ENCODE measurements at regions of chr16 and their contacts with region 1.

Region 1: DNA sequence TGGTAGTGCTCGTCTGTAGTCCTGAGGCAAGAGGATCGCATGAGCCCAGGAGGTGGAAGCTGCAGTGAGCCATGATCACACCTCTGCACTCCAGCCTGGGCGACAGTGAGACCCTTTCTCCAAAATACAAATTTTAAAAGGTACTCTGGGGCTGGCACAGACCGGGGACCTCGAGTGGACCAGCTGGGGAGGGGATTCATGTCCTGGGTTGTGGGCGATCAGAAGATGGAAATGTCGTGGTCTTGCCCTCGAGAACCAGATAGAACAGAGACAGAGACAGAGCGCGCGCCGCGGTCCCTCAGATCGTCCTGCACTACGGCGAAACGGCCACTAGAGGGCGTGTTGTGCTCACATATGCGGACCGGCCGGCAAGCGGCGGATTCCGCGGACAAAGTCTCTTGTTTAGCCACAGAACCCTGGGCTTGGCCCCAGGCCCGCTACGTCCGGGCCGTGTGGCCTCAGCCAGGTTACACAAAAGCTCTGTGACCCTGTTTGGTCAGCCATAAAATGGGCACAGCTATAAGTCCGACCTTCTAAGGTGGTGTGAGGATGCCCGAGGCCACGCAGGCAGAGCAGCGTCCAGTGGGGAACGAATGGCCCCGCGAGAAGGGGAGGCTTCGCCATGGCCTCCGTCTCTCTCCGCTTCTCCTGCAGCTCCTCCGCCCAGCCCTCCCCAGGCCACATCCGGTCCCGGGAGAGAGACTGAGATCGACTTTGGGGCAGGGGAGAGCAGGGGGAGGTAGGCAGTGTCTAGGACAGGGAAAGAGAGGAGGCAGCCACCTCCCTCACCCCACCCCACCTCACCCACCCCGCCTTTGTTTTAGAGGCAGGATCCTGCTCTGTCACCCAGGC is 14.6 kb upstream of the SBK1 start:
- DNase-seq: peak; percentile 69 to 95 (median 84)
- ATAC-seq: peak; percentile 73 to 76
- H3K4me3 Mint-ChIP-seq: peak overlapping the region; percentile 70 to 88 (median 82)
- H3K27ac Mint-ChIP-seq: peak overlapping the region; percentile 90 to 99 (median 97)
- H3K4me1 Mint-ChIP-seq: peaks cover 32 to 62% (median 47%) of the 10 kb centered on the region in 4 donors
- H3K27me3 Mint-ChIP-seq: peaks cover 0 to 10% (median 0%) of the 10 kb centered on the region in 5 donors

Region 2: DNA sequence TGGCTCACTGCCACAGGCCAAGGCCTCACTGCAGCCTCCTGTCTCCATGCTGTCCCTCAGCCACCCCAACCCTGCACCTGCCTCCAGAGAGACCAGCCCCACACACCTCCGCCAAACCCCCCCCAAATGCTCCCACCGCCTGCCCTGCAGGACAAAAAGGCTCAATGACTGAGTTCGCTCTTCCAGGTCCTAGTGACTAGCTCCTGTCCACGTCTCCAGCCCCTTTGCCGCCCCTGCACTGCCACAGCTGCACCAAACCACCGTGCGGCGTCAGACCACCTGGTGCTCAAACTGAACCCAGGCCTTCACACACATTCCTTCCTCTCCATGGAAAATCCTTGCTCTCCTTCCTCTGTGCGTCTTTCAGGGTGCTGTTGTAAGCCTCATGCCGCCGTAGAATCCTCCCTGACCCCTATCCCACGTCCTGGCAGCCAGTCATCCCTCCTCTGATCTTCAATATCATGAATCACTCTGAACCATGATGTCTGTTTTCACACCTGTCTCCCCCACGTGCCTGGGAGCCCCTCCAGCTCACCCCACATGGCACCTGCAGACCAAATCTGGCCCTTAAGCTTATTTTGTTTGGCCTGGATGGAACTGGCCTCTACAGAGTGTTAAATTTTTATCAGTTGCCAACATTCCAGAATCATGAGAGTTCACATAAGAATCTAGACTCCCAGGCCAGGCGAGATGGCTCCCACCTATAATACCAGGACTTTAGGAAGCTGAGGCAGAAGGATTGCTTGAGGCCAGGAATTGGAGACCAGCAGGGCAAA is 210.0 kb before region 1 on chr16:
- POLR2A ChIA-PET with region 1: no interaction called
- DNase-seq: no peak
- ATAC-seq: no peak
- H3K4me3 Mint-ChIP-seq: no peak overlapping the region
- H3K27ac Mint-ChIP-seq: peak overlapping the region in 1 of 10 donors; percentile 57
- H3K4me1 Mint-ChIP-seq: peaks cover 0 to 6% (median 0%) of the 10 kb centered on the region in 4 donors
- H3K27me3 Mint-ChIP-seq: peaks cover 9 to 33% (median 21%) of the 10 kb centered on the region in 5 donors

Region 3: GRCh38 chr16:28090646-28091377 is 187.0 kb before region 1 on chr16:
- POLR2A ChIA-PET with region 1: no interaction called
- DNase-seq: no peak
- ATAC-seq: no peak
- H3K4me3 Mint-ChIP-seq: no peak overlapping the region
- H3K27ac Mint-ChIP-seq: peak overlapping the region in 5 of 10 donors; percentile 8 to 70 (median 43)
- H3K4me1 Mint-ChIP-seq: peaks cover 2 to 16% (median 9%) of the 10 kb centered on the region in 4 donors
- H3K27me3 Mint-ChIP-seq: no peaks in the 10 kb centered on the region

Region 4: DNA sequence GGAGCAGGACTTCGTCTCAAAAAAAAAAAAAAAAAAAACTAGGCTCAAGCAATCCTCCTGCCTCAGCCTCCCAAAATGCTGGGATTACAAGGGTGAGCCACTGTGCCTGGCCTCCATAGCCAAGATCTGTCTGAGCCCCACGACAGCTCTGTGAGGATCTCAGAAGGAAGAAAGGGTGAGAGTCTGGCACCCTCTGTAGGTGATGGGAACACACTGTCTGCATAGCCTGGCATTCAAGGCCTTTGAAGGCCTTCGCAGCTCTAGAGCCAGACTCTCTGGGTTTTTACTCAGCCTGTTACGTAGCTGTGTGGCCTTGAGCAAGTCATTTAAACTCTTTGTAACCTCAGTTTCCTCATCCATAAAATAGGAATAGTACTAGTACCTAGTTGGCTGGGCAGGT is 59.7 kb before region 1 on chr16:
- POLR2A ChIA-PET with region 1: interaction called, 21 read pairs
- DNase-seq: peak; percentile 12 to 83 (median 66)
- ATAC-seq: peak; percentile 100
- H3K4me3 Mint-ChIP-seq: no peak overlapping the region
- H3K27ac Mint-ChIP-seq: peak overlapping the region in 9 of 10 donors; percentile 15 to 82 (median 73)
- H3K4me1 Mint-ChIP-seq: peaks cover 0 to 16% (median 2%) of the 10 kb centered on the region in 4 donors
- H3K27me3 Mint-ChIP-seq: no peaks in the 10 kb centered on the region

Region 5: GRCh38 chr16:28255838-28256237 is 21.9 kb before region 1 on chr16:
- POLR2A ChIA-PET with region 1: no interaction called
- DNase-seq: no peak
- ATAC-seq: no peak
- H3K4me3 Mint-ChIP-seq: no peak overlapping the region
- H3K27ac Mint-ChIP-seq: peak overlapping the region in 1 of 10 donors; percentile 70
- H3K4me1 Mint-ChIP-seq: peaks cover 9 to 21% (median 14%) of the 10 kb centered on the region in 4 donors
- H3K27me3 Mint-ChIP-seq: peaks cover 0 to 5% (median 0%) of the 10 kb centered on the region in 5 donors

Region 6: GRCh38 chr16:28291873-28292660 is 14.3 kb after region 1 on chr16 and contains the start of gene SBK1:
- POLR2A ChIA-PET with region 1: interaction called, 888 read pairs
- DNase-seq: peak; percentile 74 to 91 (median 85)
- ATAC-seq: peak; percentile 86 to 89
- H3K4me3 Mint-ChIP-seq: peak within 1 kb of the TSS; percentile 88 to 97 (median 94)
- H3K27ac Mint-ChIP-seq: peak within 1 kb of the TSS; percentile 78 to 95 (median 92)
- H3K4me1 Mint-ChIP-seq: peaks cover 41 to 75% (median 73%) of the 10 kb centered on the region in 4 donors
- H3K27me3 Mint-ChIP-seq: no peaks in the 10 kb centered on the region
- polyA plus RNA-seq, gene SBK1: 5.7 to 19.9 (median 7.4) TPM